Heart right ventricle (tissue), 16 donors: ENCODE measurements at regions of chr10 and their contacts with region 1.

Region 1: GRCh38 chr10:16116404-16117304 is 256.3 kb upstream of the MINDY3 start:
- DNase-seq: peak in 1 of 2 donors; percentile 6
- ATAC-seq: peak in 3 of 8 donors; percentile 40 to 51 (median 50)
- H3K4me3 ChIP-seq: no peak overlapping the region
- H3K27ac ChIP-seq: no peak overlapping the region
- H3K4me1 ChIP-seq: no peaks in the 10 kb centered on the region
- H3K27me3 ChIP-seq: peaks cover 0 to 6% (median 0%) of the 10 kb centered on the region in 7 donors
- CTCF ChIP-seq: peak in 8 of 9 donors; percentile 20 to 59 (median 50)

Region 2: GRCh38 chr10:16777473-16778370 is 661.1 kb after region 1 on chr10:
- intact Hi-C with region 1: loop called in 6 of 10 experiments (anchors 5 to 10 kb)
- DNase-seq: peak in 1 of 2 donors; percentile 69
- ATAC-seq: peak; percentile 78 to 94 (median 88)
- H3K4me3 ChIP-seq: peak overlapping the region in 1 of 10 donors; percentile 5
- H3K27ac ChIP-seq: peak overlapping the region in 8 of 10 donors; percentile 23 to 66 (median 32)
- H3K4me1 ChIP-seq: peaks cover 0 to 39% (median 25%) of the 10 kb centered on the region in 9 donors
- H3K27me3 ChIP-seq: no peaks in the 10 kb centered on the region
- CTCF ChIP-seq: peak; percentile 60 to 86 (median 82)

Region 3: DNA sequence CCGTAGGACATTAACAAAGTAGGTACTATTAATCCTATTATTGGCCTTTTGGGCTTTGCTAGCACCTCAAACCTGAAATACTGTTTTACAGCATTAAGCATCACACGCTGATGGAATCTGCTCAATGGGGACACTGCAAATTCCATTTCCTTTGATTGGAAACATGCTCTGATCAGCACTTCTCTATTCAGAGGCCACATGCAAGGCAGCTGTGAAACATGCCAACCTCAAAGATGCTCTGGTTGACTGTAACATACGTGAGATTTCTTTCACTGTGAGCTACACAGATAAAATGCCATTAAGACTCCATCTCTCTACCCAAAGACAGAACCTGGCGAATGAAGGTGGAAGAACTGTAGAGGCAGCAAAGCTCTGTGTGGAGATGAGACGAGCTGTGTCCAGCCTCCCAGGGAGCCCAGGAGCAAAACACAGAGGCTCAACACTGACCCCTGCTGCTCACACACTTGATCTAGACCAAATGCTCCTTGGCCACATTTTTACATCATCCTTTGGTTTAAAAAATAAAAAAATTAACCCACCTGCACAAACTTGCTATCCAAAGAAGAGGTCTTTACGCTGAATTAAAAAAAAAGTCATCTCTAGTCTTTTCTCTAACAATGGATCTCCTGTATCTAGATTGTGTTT is 692.5 kb after region 1 on chr10:
- intact Hi-C with region 1: loop called in 1 of 10 experiments (anchors 10 kb)
- DNase-seq: peak; percentile 28 to 58
- ATAC-seq: peak in 7 of 8 donors; percentile 49 to 80 (median 64)
- H3K4me3 ChIP-seq: no peak overlapping the region
- H3K27ac ChIP-seq: no peak overlapping the region
- H3K4me1 ChIP-seq: peaks cover 0 to 39% (median 11%) of the 10 kb centered on the region in 9 donors
- H3K27me3 ChIP-seq: no peaks in the 10 kb centered on the region
- CTCF ChIP-seq: peak; percentile 34 to 77 (median 66)